ENCODE measurements at regions of chr21 and their contacts with region 1.

Region 1: DNA sequence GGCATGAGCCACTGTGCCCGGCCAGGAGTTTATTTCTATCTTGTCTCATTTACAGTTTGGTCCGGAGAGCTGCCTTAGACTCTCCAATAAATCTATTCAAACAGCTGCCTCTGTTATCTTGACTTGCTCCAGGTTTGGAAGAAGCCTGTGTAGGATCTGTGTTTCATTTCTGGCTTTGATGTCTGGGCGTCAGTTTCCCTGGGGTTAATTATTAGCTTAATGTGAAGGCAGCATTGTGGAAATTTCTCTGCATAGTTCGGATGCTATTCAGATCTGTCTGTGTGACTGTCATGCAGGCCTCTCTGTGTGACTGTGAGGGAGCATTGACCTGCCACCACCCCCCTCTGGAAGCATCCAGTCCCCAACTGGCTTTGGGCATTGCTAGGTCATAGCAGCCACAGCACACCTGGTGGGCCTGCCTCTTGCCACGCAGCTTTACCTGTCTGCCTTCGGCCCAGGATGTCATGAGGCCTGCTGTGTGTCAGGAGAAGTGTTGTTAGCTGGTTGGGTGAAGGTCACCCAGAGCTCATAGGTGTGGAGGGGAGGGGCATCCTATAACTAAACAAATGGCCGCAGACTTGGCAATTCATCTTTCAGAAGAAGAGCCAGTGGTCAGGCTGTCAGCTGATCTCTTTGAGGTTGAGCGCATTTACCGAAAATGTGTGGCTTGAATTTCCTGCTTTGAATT is 9.8 kb downstream of the IFNGR2 start:
- DNase-seq: peak; percentile 41
- CTCF ChIP-seq: no peak

Region 2: GRCh38 chr21:33396947-33397346 is 16.0 kb before region 1 on chr21:
- CTCF ChIA-PET with region 1: no interaction called
- POLR2A ChIA-PET with region 1: no interaction called
- DNase-seq: no peak
- CTCF ChIP-seq: no peak

Region 3: DNA sequence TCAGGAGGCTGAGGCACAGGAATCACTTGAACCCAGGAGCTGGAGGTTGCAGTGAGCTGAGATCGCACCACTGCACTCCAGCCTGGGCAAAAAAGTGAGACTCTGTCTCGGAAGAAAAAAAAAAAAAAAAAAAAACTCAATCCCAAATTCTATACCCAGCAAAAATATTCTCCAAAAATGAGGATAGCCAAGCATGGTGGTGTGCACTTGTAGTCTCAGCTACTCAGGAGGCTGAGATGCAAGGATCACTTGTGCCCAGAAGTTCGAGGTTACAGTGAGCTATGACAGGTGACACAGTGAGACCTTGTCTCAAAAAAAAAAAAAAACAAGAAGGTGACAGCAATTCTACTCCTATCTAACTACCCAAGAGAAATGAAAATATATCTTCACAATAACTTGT is 60.4 kb after region 1 on chr21:
- CTCF ChIA-PET with region 1: no interaction called
- POLR2A ChIA-PET with region 1: interaction called, 10 read pairs
- DNase-seq: no peak
- CTCF ChIP-seq: no peak

Measured in GM10248 (cell line).